H1 (cell line): ENCODE measurements at regions of chr1 and their contacts with region 1.

Region 1: DNA sequence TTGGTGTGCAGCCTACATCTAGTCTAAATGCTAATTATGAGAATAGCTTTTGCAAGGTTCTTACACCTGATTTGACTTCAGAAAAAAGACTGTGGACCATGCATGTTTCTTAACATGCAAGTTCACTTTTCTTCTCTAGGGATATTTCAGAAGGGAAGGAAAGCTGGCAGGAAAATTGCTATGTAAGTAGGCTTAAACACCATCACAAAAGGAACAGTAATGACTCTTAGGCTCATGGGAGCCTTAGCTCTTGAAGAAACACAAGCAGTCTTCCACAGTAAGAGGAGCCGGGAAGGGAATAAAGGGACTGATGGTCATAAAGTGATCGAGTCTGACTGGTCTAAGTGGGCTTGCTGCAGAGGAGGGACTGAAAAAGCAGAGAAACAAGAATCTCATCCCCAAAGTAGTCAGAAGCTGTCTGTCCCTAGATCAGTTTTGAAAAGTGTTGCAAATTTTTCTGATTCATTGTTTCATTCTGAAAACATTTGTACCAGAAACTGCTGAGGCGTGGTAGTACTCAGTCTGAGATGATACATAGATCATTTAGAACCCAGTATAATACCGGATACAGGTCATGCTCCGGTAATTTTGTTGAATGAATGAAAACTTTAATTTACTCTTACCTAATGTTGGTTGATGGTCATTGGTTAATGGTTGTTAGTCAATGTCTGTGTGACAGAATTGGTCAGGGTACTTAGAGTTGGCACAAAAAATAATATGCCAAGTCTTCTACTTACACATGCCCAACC is 40.9 kb downstream of the SMYD2 start:
- DNase-seq: no peak
- H3K4me3 ChIP-seq: no peak overlapping the region
- H3K27ac ChIP-seq: no peak overlapping the region
- H3K4me1 ChIP-seq: peaks cover 3 to 14% (median 9%) of the 10 kb centered on the region in 4 experiments; a peak in 6 of 7 replicates
- H3K27me3 ChIP-seq: peaks cover 9 to 23% (median 18%) of the 10 kb centered on the region in 4 experiments; a peak in 6 of 7 replicates
- CTCF ChIP-seq: no peak
- EP300 ChIP-seq: no peak
- POLR2A ChIP-seq: no peak
- RAD21 ChIP-seq: no peak

Region 2: GRCh38 chr1:214271174-214271858 is 50.6 kb before region 1 on chr1:
- CTCF ChIA-PET with region 1: interaction called, 162 read pairs
- POLR2A ChIA-PET with region 1: no interaction called
- DNase-seq: no peak
- H3K4me3 ChIP-seq: no peak overlapping the region
- H3K27ac ChIP-seq: no peak overlapping the region
- H3K4me1 ChIP-seq: peaks cover 0 to 2% (median 0%) of the 10 kb centered on the region in 4 experiments; a peak in 4 of 7 replicates
- H3K27me3 ChIP-seq: no peaks in the 10 kb centered on the region
- CTCF ChIP-seq: peak; percentile 39 to 50 (median 46)
- EP300 ChIP-seq: no peak
- POLR2A ChIP-seq: no peak
- RAD21 ChIP-seq: peak; percentile 68 to 77

Region 3: GRCh38 chr1:214281021-214281719 is 40.7 kb before region 1 on chr1 and contains the start of gene SMYD2:
- CTCF ChIA-PET with region 1: interaction called, 162 read pairs
- POLR2A ChIA-PET with region 1: interaction called, 15 read pairs
- DNase-seq: peak in 1 of 2 experiments; percentile 85
- H3K4me3 ChIP-seq: peak within 1 kb of the TSS; percentile 70 to 79 (median 70)
- H3K27ac ChIP-seq: peak within 1 kb of the TSS; percentile 33; the same call in 1 of the 2 replicates
- H3K4me1 ChIP-seq: peaks cover 2 to 12% (median 4%) of the 10 kb centered on the region in 4 experiments; a peak in 4 of 7 replicates
- H3K27me3 ChIP-seq: peaks cover 8 to 38% (median 34%) of the 10 kb centered on the region in 4 experiments
- CTCF ChIP-seq: no peak
- EP300 ChIP-seq: no peak
- POLR2A ChIP-seq: no peak
- RAD21 ChIP-seq: no peak
- total RNA-seq, gene SMYD2: 4.4 and 5.2 TPM in 2 replicates